Naive thymus-derived CD4-positive, alpha-beta T cell (primary cell): ENCODE measurements at regions of chr12 and their contacts with region 1.

Region 1: GRCh38 chr12:47079468-47079980 is at the starts of genes AMIGO2 and PCED1B:
- DNase-seq: peak; percentile 31 to 72 (median 51)
- ATAC-seq: peak; percentile 71
- H3K4me3 ChIP-seq: peak within 1 kb of the TSS; percentile 84
- H3K4me3 Mint-ChIP-seq: peak within 1 kb of the TSS; percentile 91 to 100 (median 96)
- H3K27ac ChIP-seq: peak within 1 kb of the TSS; percentile 80
- H3K27ac Mint-ChIP-seq: peak within 1 kb of the TSS; percentile 87 to 99 (median 96)
- H3K4me1 ChIP-seq: peaks cover 39 to 45% of the 10 kb centered on the region in 2 donors
- H3K4me1 Mint-ChIP-seq: peaks cover 44 to 83% (median 74%) of the 10 kb centered on the region in 7 donors
- H3K27me3 ChIP-seq: no peaks in the 10 kb centered on the region
- H3K27me3 Mint-ChIP-seq: no peaks in the 10 kb centered on the region
- total RNA-seq, gene AMIGO2: 6.8 to 13.5 (median 12.8) TPM
- total RNA-seq, gene PCED1B: 41.4 to 98.3 (median 70.0) TPM

Region 2: DNA sequence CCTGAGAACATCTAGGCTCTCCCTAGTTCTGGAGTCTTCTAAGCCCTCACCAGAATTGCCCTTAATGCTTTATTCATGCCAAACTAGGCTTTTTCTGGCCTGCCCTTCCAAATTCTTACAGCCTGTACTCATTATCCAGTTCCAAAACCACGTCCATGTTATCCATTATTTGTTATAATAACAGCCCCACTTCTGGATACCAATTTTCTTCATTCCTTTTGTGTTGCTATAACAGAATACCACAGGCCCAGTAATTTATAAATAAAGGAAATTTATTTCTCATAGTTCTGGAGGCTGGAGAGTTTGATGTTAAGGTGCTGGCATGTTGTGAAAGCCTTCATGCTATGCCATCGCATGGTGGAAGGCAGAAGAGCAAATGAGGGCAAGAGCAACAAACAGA is 68.2 kb after region 1 on chr12:
- CTCF ChIA-PET with region 1: interaction called, 4 read pairs
- POLR2A ChIA-PET with region 1: interaction called, 4 read pairs
- intact Hi-C with region 1: loop called (anchors 2 kb)
- DNase-seq: no peak
- ATAC-seq: no peak
- H3K4me3 ChIP-seq: no peak overlapping the region
- H3K4me3 Mint-ChIP-seq: no peak overlapping the region
- H3K27ac ChIP-seq: no peak overlapping the region
- H3K27ac Mint-ChIP-seq: peak overlapping the region in 2 of 9 donors; percentile 24 to 86
- H3K4me1 ChIP-seq: peaks cover 0 to 11% of the 10 kb centered on the region in 2 donors
- H3K4me1 Mint-ChIP-seq: peaks cover 14 to 50% (median 36%) of the 10 kb centered on the region in 7 donors
- H3K27me3 ChIP-seq: no peaks in the 10 kb centered on the region
- H3K27me3 Mint-ChIP-seq: no peaks in the 10 kb centered on the region

Region 3: GRCh38 chr12:47207340-47207717 is 127.8 kb after region 1 on chr12:
- CTCF ChIA-PET with region 1: no interaction called
- POLR2A ChIA-PET with region 1: interaction called, 58 read pairs
- intact Hi-C with region 1: no loop called
- DNase-seq: peak in 4 of 9 donors; percentile 27 to 49 (median 38)
- ATAC-seq: peak; percentile 79
- H3K4me3 ChIP-seq: peak overlapping the region; percentile 42
- H3K4me3 Mint-ChIP-seq: peak overlapping the region; percentile 60 to 99 (median 84)
- H3K27ac ChIP-seq: peak overlapping the region; percentile 76
- H3K27ac Mint-ChIP-seq: peak overlapping the region; percentile 41 to 98 (median 93)
- H3K4me1 ChIP-seq: peaks cover 72 to 78% of the 10 kb centered on the region in 2 donors
- H3K4me1 Mint-ChIP-seq: peaks cover 50 to 93% (median 75%) of the 10 kb centered on the region in 7 donors
- H3K27me3 ChIP-seq: no peaks in the 10 kb centered on the region
- H3K27me3 Mint-ChIP-seq: no peaks in the 10 kb centered on the region

Region 4: GRCh38 chr12:47397664-47398281 is 318.2 kb after region 1 on chr12:
- CTCF ChIA-PET with region 1: interaction called, 3 read pairs
- POLR2A ChIA-PET with region 1: interaction called, 6 read pairs
- intact Hi-C with region 1: loop called (anchors 1 kb)
- DNase-seq: peak in 8 of 9 donors; percentile 33 to 71 (median 54)
- ATAC-seq: peak; percentile 86
- H3K4me3 ChIP-seq: peak overlapping the region; percentile 20
- H3K4me3 Mint-ChIP-seq: peak overlapping the region; percentile 29 to 73 (median 64)
- H3K27ac ChIP-seq: no peak overlapping the region
- H3K27ac Mint-ChIP-seq: peak overlapping the region; percentile 61 to 98 (median 91)
- H3K4me1 ChIP-seq: peaks cover 41% of the 10 kb centered on the region in 2 donors
- H3K4me1 Mint-ChIP-seq: peaks cover 28 to 76% (median 52%) of the 10 kb centered on the region in 7 donors
- H3K27me3 ChIP-seq: no peaks in the 10 kb centered on the region
- H3K27me3 Mint-ChIP-seq: no peaks in the 10 kb centered on the region